ENCODE measurements at regions of chr1 and their contacts with region 1.

Region 1: DNA sequence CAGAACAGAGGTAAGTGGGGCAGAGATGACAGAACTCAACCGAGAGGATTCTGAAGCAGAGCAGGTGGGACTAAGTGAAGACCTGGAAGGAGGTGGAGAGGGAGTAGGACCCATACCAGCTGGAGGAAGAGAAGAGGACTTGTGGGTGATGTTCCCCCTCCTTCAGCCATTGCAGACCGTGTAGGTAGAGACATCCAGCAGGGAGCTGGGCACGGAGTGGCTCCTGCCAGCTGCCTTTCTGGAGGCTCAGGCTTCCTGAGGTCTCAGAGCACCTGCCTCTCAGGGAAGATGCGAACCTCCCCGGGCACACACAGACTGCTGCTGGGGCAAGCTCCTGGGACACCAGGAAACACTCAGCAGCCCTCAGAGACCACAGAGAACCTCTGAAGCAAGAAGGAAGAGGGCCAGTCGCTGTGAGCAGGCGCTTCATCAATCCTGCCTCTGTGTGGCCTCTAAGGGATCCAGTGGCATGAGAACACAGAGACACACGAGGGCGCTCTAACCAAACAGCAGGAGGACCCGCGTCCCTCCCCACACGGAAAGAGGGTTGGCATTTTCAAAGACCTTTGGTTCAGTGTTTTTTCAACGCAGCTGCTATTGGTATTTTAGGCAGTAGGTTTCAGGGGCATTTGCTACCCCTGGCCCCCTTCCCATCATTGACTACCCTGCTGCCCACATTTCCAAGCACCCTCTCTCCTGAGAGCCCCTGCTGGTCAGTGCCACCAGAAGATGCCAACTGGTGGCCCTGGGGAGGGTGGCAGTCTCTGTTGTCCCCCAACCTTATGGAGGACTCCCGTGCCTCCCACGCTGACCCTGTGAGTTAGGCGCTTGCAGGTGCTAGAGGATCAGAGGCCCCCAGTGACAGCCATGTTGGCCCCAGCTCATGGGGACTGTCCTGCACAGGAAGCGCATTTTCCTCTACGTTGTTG is 89.6 kb upstream of the EDN2 start:
- H3K4me3 Mint-ChIP-seq: no peak overlapping the region
- H3K27ac Mint-ChIP-seq: peak overlapping the region; percentile 56
- H3K4me1 Mint-ChIP-seq: peaks cover 15% of the 10 kb centered on the region
- H3K27me3 Mint-ChIP-seq: no peaks in the 10 kb centered on the region

Region 2: GRCh38 chr1:41432481-41433280 is 141.4 kb before region 1 on chr1:
- intact Hi-C with region 1: no loop called
- H3K4me3 Mint-ChIP-seq: no peak overlapping the region
- H3K27ac Mint-ChIP-seq: no peak overlapping the region
- H3K4me1 Mint-ChIP-seq: peaks cover 36% of the 10 kb centered on the region
- H3K27me3 Mint-ChIP-seq: peaks cover 32% of the 10 kb centered on the region

Region 3: GRCh38 chr1:41639332-41639936 is 65.4 kb after region 1 on chr1:
- intact Hi-C with region 1: no loop called
- H3K4me3 Mint-ChIP-seq: no peak overlapping the region
- H3K27ac Mint-ChIP-seq: peak overlapping the region; percentile 59
- H3K4me1 Mint-ChIP-seq: peaks cover 35% of the 10 kb centered on the region
- H3K27me3 Mint-ChIP-seq: no peaks in the 10 kb centered on the region

Region 4: GRCh38 chr1:41802532-41803501 is 228.8 kb after region 1 on chr1:
- intact Hi-C with region 1: loop called (anchors 2 kb)
- H3K4me3 Mint-ChIP-seq: no peak overlapping the region
- H3K27ac Mint-ChIP-seq: peak overlapping the region; percentile 84
- H3K4me1 Mint-ChIP-seq: peaks cover 64% of the 10 kb centered on the region
- H3K27me3 Mint-ChIP-seq: no peaks in the 10 kb centered on the region